ENCODE measurements at regions of chr1 and their contacts with region 1.

Region 1: GRCh38 chr1:37682334-37682987 is 9.9 kb upstream of the CDCA8 start:
- DNase-seq: no peak
- H3K4me3 ChIP-seq: no peak overlapping the region
- CTCF ChIP-seq: peak; percentile 79

Region 2: GRCh38 chr1:36516372-36517325 is 1165.8 kb before region 1 on chr1:
- CTCF ChIA-PET with region 1: interaction called, 11 read pairs
- POLR2A ChIA-PET with region 1: no interaction called
- DNase-seq: no peak
- H3K4me3 ChIP-seq: no peak overlapping the region
- CTCF ChIP-seq: peak; percentile 82

Region 3: DNA sequence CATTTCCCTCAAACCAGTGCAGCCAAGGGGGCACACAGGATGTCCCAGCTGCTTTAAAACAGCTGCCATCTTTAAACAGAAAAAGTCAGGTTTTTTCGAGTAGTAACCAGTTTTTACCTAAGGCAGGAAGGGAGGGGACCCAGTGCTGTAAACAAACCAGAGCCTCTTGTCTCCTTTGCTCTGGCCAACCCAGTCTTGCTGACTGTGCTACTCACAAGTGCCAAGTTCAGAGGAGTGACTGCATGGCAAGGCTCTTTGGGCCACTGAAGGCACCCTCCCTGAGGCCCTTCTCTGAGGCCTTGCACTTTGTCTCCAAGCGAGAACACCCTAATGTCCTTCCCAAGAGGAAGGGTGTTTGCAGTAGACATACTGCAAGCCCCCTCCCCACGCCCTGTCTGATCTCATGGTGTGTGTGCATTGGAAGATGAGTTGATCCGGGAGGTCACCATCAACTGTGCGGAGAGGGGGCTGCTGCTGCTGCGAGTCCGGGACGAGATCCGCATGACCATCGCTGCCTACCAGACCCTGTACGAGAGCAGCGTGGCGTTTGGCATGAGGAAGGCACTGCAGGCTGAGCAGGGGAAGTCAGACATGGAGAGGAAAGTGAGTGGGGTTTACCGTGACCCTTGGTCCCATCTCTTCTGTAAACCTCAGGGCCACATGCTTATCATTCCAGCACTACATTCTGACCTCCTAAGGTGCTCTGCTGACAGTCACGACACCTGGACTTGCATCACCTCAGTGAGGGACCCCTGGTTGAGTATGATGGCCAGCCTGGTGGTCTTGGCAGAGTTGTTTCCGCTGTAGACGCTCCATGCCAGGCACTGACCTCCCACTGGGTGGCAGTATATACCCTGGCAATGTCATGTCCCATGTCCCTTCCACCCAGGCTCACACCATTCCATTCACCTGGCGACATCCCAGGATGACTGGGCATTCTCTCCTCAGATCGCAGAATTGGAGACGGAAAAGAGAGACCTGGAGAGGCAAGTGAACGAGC is 121.0 kb before region 1 on chr1:
- CTCF ChIA-PET with region 1: interaction called, 64 read pairs
- POLR2A ChIA-PET with region 1: interaction called, 3 read pairs
- DNase-seq: no peak
- H3K4me3 ChIP-seq: no peak overlapping the region
- CTCF ChIP-seq: peak; percentile 61

Region 4: GRCh38 chr1:37595440-37596319 is 86.8 kb before region 1 on chr1 and contains the start of gene GNL2:
- CTCF ChIA-PET with region 1: interaction called, 382 read pairs
- POLR2A ChIA-PET with region 1: no interaction called
- DNase-seq: peak; percentile 59
- H3K4me3 ChIP-seq: peak within 1 kb of the TSS; percentile 91
- CTCF ChIP-seq: no peak

Region 5: GRCh38 chr1:37704966-37705365 is 22.5 kb after region 1 on chr1:
- CTCF ChIA-PET with region 1: interaction called, 10 read pairs
- POLR2A ChIA-PET with region 1: no interaction called
- DNase-seq: peak; percentile 29
- H3K4me3 ChIP-seq: no peak overlapping the region
- CTCF ChIP-seq: no peak

Region 6: GRCh38 chr1:38005195-38006007 is 322.9 kb after region 1 on chr1 and contains the start of gene FHL3:
- CTCF ChIA-PET with region 1: no interaction called
- POLR2A ChIA-PET with region 1: no interaction called
- DNase-seq: no peak
- H3K4me3 ChIP-seq: peak within 1 kb of the TSS; percentile 93
- CTCF ChIP-seq: no peak